Activated CD4-positive, alpha-beta memory T cell treated with anti-CD3 and anti-CD28 coated beads, Interleukin-2, amount 10 ng/mL, durations not matched to agents 7 days and 5 days (primary cell): ENCODE measurements at regions of chr19 and their contacts with region 1.

Region 1: DNA sequence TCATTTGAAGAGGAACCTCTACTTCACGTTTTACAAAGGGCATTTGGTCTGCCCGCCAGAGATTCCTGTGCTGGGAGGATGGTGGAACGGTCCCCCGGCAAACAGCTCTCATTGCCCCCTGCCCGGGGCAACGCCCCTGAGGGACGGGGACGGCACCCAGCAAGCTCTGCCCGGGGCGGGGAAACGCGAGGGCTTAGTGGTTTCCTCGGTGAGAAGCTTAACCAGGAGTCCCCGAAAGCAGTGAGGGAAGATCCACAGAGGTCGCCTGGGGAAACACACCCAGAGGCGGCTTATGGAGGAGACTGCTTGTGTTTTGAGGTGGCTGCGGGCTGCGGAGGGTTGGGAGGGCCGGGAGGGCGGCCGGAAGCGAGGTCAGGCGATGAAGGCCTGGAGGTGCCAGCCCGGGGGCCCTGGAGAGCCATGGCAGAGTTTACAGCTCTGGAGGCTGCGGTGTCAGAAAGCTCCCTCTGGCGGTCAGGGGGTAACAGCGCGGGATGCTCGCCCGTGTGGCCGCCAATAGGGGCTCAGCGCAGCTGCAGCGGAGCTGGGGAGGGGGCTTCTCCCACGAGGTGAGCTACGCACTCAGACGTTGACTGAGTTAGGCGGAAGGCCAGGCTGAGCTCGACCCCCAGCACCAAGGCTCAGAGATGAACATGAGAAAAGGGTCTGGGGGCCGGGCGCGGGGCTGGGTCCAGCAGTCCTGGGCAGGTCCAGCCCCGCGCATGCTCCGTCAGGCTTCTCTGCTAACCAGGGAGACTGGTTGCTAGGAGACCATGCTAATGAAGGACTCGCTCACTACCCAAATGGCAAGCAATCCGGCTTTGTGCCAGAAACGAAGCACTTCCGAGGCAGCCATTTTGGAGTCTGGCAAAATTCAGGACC is 652 bp upstream of the TPGS1 start:
- DNase-seq: peak; percentile 94
- H3K4me3 Mint-ChIP-seq: peak overlapping the region; percentile 81
- H3K27ac Mint-ChIP-seq: peak overlapping the region; percentile 98
- H3K4me1 Mint-ChIP-seq: peaks cover 52% of the 10 kb centered on the region
- H3K27me3 Mint-ChIP-seq: no peaks in the 10 kb centered on the region

Region 2: GRCh38 chr19:488505-489417 is 17.9 kb before region 1 on chr19:
- CTCF ChIA-PET with region 1: interaction called, 19 read pairs
- POLR2A ChIA-PET with region 1: interaction called, 44 read pairs
- DNase-seq: peak; percentile 93
- H3K4me3 Mint-ChIP-seq: peak overlapping the region; percentile 76
- H3K27ac Mint-ChIP-seq: peak overlapping the region; percentile 64
- H3K4me1 Mint-ChIP-seq: peaks cover 14% of the 10 kb centered on the region
- H3K27me3 Mint-ChIP-seq: peaks cover 4% of the 10 kb centered on the region

Region 3: GRCh38 chr19:522726-523125 is 16.1 kb after region 1 on chr19:
- CTCF ChIA-PET with region 1: interaction called, 59 read pairs
- POLR2A ChIA-PET with region 1: interaction called, 22 read pairs
- DNase-seq: no peak
- H3K4me3 Mint-ChIP-seq: no peak overlapping the region
- H3K27ac Mint-ChIP-seq: no peak overlapping the region
- H3K4me1 Mint-ChIP-seq: peaks cover 6% of the 10 kb centered on the region
- H3K27me3 Mint-ChIP-seq: peaks cover 4% of the 10 kb centered on the region

Region 4: GRCh38 chr19:572140-572742 is 65.6 kb after region 1 on chr19 and contains the start of gene BSG:
- CTCF ChIA-PET with region 1: interaction called, 7 read pairs
- POLR2A ChIA-PET with region 1: interaction called, 12 read pairs
- DNase-seq: peak; percentile 99
- H3K4me3 Mint-ChIP-seq: peak within 1 kb of the TSS; percentile 84
- H3K27ac Mint-ChIP-seq: peak within 1 kb of the TSS; percentile 96
- H3K4me1 Mint-ChIP-seq: peaks cover 47% of the 10 kb centered on the region
- H3K27me3 Mint-ChIP-seq: no peaks in the 10 kb centered on the region
- total RNA-seq, gene BSG: 255 to 257 TPM

Region 5: DNA sequence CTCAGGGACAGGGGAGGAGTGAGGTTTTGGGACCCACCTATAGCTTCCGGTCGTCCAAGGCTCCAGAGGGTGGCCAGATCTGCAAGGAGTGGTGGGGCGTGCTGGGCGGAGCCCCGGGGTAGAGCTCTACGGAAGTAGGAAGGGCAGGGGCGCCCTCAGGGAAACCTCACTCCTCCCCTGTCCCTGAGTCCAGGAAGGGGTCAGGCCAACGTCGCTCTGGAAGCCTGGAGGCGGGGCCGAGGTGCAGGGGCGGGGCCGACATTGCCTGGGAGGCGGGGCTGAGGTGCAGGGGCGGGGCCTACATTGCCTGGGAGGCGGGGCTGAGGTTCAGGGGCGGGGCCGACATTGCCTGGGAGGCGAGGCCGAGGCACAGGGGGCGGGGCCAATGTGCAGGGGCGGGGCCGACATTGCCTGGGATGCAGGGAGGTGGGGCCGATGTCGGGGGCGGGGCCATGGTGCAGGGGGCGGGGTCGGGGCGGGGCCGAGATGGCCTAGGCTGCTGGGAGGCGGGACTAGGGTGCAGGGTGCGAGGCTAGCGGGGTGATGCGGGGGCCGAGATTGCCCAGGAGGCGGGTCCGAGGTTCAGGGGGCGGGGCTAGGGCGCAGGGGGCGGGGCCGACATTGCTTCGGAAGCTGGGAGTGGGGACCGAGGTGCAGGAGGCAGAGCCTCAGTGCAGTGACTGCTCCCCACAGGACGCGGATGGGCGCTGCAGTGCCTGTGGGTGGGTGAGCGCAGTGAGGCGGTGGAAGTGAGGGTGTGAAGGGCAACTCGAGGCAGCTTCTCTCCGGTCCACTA is 197.2 kb after region 1 on chr19:
- CTCF ChIA-PET with region 1: no interaction called
- POLR2A ChIA-PET with region 1: no interaction called
- DNase-seq: peak; percentile 72
- H3K4me3 Mint-ChIP-seq: no peak overlapping the region
- H3K27ac Mint-ChIP-seq: no peak overlapping the region
- H3K4me1 Mint-ChIP-seq: peaks cover 16% of the 10 kb centered on the region
- H3K27me3 Mint-ChIP-seq: peaks cover 18% of the 10 kb centered on the region